ENCODE measurements at regions of chr5 and their contacts with region 1.

Region 1: GRCh38 chr5:113022661-113023060 is 46.1 kb downstream of the DCP2 start:
- DNase-seq: peak in 4 of 14 experiments; percentile 1 to 87 (median 78)
- ATAC-seq: peak; percentile 86
- H3K4me3 ChIP-seq: no peak overlapping the region
- H3K4me3 Mint-ChIP-seq: peak overlapping the region; percentile 57
- H3K27ac ChIP-seq: peak overlapping the region; percentile 18 to 71
- H3K27ac Mint-ChIP-seq: peak overlapping the region; percentile 87
- H3K4me1 ChIP-seq: peaks cover 20% of the 10 kb centered on the region
- H3K4me1 Mint-ChIP-seq: peaks cover 77% of the 10 kb centered on the region
- H3K27me3 ChIP-seq: no peaks in the 10 kb centered on the region
- H3K27me3 Mint-ChIP-seq: no peaks in the 10 kb centered on the region
- CTCF ChIP-seq: no peak

Region 2: GRCh38 chr5:112576298-112576925 is 446.2 kb before region 1 on chr5:
- CTCF ChIA-PET with region 1: no interaction called
- POLR2A ChIA-PET with region 1: no interaction called
- intact Hi-C with region 1: no loop called
- DNase-seq: no peak
- ATAC-seq: no peak
- H3K4me3 ChIP-seq: no peak overlapping the region
- H3K4me3 Mint-ChIP-seq: no peak overlapping the region
- H3K27ac ChIP-seq: no peak overlapping the region
- H3K27ac Mint-ChIP-seq: no peak overlapping the region
- H3K4me1 ChIP-seq: no peaks in the 10 kb centered on the region
- H3K4me1 Mint-ChIP-seq: no peaks in the 10 kb centered on the region
- H3K27me3 ChIP-seq: no peaks in the 10 kb centered on the region
- H3K27me3 Mint-ChIP-seq: peaks cover 7% of the 10 kb centered on the region
- CTCF ChIP-seq: no peak

Region 3: GRCh38 chr5:113059232-113060040 is 36.8 kb after region 1 on chr5:
- CTCF ChIA-PET with region 1: no interaction called
- POLR2A ChIA-PET with region 1: interaction called, 3 read pairs
- intact Hi-C with region 1: loop called in 1 of 2 experiments (anchors 5 kb)
- DNase-seq: no peak
- ATAC-seq: no peak
- H3K4me3 ChIP-seq: no peak overlapping the region
- H3K4me3 Mint-ChIP-seq: no peak overlapping the region
- H3K27ac ChIP-seq: no peak overlapping the region
- H3K27ac Mint-ChIP-seq: peak overlapping the region; percentile 19
- H3K4me1 ChIP-seq: peaks cover 50% of the 10 kb centered on the region
- H3K4me1 Mint-ChIP-seq: peaks cover 47% of the 10 kb centered on the region
- H3K27me3 ChIP-seq: no peaks in the 10 kb centered on the region
- H3K27me3 Mint-ChIP-seq: no peaks in the 10 kb centered on the region
- CTCF ChIP-seq: no peak

Region 4: GRCh38 chr5:113294311-113295110 is 271.9 kb after region 1 on chr5:
- CTCF ChIA-PET with region 1: no interaction called
- POLR2A ChIA-PET with region 1: interaction called, 5 read pairs
- intact Hi-C with region 1: loop called in 1 of 2 experiments (anchors 10 kb)
- DNase-seq: peak; percentile 55 to 85 (median 68)
- ATAC-seq: peak; percentile 87
- H3K4me3 ChIP-seq: peak overlapping the region; percentile 82
- H3K4me3 Mint-ChIP-seq: peak overlapping the region; percentile 94
- H3K27ac ChIP-seq: no peak overlapping the region
- H3K27ac Mint-ChIP-seq: peak overlapping the region; percentile 47
- H3K4me1 ChIP-seq: peaks cover 20% of the 10 kb centered on the region
- H3K4me1 Mint-ChIP-seq: peaks cover 16% of the 10 kb centered on the region
- H3K27me3 ChIP-seq: peaks cover 3 to 14% of the 10 kb centered on the region in 2 experiments
- H3K27me3 Mint-ChIP-seq: peaks cover 34% of the 10 kb centered on the region
- CTCF ChIP-seq: no peak

Measured in CD4-positive, alpha-beta T cell (primary cell).